ENCODE measurements at regions of chr1 and their contacts with region 1.

Region 1: DNA sequence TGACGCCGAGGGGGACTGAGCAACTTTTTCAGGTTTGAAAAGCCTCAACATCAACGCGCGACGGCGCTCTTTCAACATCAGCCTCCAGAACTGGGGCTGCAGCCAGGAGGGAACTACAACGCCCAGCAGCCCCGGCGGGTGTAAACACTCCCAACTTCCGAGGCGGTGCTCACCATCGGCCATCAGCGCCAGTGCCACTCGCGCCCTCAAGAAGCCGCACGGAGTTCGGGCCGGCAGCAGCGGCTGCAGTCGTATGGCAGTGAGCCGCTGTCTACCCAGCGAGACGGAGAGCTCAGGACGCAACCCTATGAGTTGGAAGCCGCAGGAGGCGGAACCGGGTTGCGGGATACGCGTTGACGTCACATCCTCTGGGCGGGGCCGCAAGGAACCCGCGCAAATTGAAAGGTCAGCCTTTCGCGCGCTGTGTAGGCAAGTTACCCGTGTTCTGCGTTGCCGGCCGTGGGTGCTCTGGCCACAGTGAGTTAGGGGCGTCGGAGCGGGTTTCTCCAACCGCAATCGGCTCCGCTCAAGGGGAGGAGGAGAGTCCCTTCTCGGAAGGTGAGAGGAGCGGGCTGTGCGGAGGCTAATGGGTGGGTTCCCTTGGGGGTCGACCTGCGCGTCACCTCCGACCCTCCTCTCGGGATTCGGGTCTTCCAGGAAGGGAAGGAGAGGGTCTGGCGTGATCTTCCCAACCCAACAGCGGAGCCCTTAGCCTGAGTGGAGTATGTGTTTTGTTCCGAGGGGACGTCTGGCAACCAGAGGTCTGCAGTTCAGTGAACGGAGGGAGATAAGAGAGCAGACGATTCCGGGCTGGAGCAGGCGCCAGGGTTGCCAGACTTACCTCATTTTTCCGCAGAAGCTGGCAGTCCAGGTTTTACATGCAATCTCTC is at the start of gene EXO1:
- DNase-seq: peak; percentile 93
- H3K4me3 Mint-ChIP-seq: peak within 1 kb of the TSS; percentile 98
- H3K27ac Mint-ChIP-seq: peak within 1 kb of the TSS; percentile 99
- H3K4me1 Mint-ChIP-seq: peaks cover 22% of the 10 kb centered on the region
- H3K27me3 Mint-ChIP-seq: peaks cover 1% of the 10 kb centered on the region
- total RNA-seq, gene EXO1: 55.3 to 59.6 TPM

Region 2: GRCh38 chr1:241519308-241520079 is 328.5 kb before region 1 on chr1 and contains the start of gene FH:
- CTCF ChIA-PET with region 1: no interaction called
- intact Hi-C with region 1: loop called (anchors 1 kb)
- DNase-seq: peak; percentile 97
- H3K4me3 Mint-ChIP-seq: peak within 1 kb of the TSS; percentile 89
- H3K27ac Mint-ChIP-seq: peak within 1 kb of the TSS; percentile 77
- H3K4me1 Mint-ChIP-seq: peaks cover 11% of the 10 kb centered on the region
- H3K27me3 Mint-ChIP-seq: peaks cover 11% of the 10 kb centered on the region
- total RNA-seq, gene FH: 91.6 to 95.4 TPM

Region 3: GRCh38 chr1:241592273-241592958 is 255.6 kb before region 1 on chr1:
- CTCF ChIA-PET with region 1: no interaction called
- intact Hi-C with region 1: loop called (anchors 1 kb)
- DNase-seq: peak; percentile 7
- H3K4me3 Mint-ChIP-seq: no peak overlapping the region
- H3K27ac Mint-ChIP-seq: peak overlapping the region; percentile 79
- H3K4me1 Mint-ChIP-seq: peaks cover 29% of the 10 kb centered on the region
- H3K27me3 Mint-ChIP-seq: no peaks in the 10 kb centered on the region

Region 4: GRCh38 chr1:241716915-241717656 is 131.0 kb before region 1 on chr1:
- CTCF ChIA-PET with region 1: no interaction called
- intact Hi-C with region 1: loop called (anchors 2 kb)
- DNase-seq: peak; percentile 35
- H3K4me3 Mint-ChIP-seq: no peak overlapping the region
- H3K27ac Mint-ChIP-seq: peak overlapping the region; percentile 60
- H3K4me1 Mint-ChIP-seq: peaks cover 22% of the 10 kb centered on the region
- H3K27me3 Mint-ChIP-seq: no peaks in the 10 kb centered on the region

Region 5: GRCh38 chr1:242017584-242018233 is 169.7 kb after region 1 on chr1:
- CTCF ChIA-PET with region 1: no interaction called
- intact Hi-C with region 1: loop called (anchors 5 kb)
- DNase-seq: peak; percentile 43
- H3K4me3 Mint-ChIP-seq: no peak overlapping the region
- H3K27ac Mint-ChIP-seq: no peak overlapping the region
- H3K4me1 Mint-ChIP-seq: no peaks in the 10 kb centered on the region
- H3K27me3 Mint-ChIP-seq: no peaks in the 10 kb centered on the region

Measured in activated naive CD4-positive, alpha-beta T cell treated with anti-CD3 and anti-CD28 coated beads for 36 hours (primary cell).